ENCODE measurements at regions of chr18 and their contacts with region 1.

Region 1: DNA sequence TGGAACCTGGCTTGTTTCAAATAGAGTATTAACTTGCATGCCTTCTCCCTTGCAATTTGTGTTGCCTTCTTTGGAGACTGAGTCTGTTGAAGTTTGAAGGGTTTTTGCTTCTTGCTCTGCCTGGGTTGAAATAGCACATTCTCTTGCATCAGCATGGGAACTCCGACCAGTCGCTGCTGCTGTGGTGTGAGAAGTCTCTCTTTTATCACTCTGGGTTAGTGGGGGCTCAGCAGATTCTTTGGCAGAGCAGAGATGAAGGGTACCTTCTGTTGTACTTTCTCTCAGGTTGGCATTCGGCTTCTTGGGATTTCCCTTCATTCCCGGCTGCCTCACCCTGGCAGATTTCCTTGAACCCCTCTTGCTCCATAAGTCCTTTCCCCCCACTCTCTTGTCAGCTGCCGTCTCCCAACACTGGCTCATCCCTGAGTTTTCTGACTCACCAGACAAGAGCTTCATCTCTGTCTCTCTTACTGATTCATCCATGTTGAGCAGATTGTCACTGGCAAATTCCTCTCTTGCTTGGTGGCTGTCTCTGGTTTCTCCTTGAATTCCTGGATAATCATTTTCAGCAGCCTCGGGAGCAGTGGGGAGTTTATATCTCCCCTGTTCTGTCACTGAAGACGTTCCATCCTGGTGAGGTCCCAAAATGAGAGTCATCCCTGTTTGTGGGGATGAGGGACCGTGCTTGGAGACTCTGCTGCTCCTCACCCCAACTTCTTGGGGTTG is 49.9 kb downstream of the ALPK2 start:
- DNase-seq: peak; percentile 88
- ATAC-seq: peak; percentile 28
- H3K4me3 ChIP-seq: peak overlapping the region; percentile 57
- H3K27ac ChIP-seq: peak overlapping the region; percentile 93
- H3K4me1 ChIP-seq: peaks cover 22% of the 10 kb centered on the region
- H3K27me3 ChIP-seq: no peaks in the 10 kb centered on the region
- CTCF ChIP-seq: no peak
- POLR2A ChIP-seq: peak; percentile 85
- RAD21 ChIP-seq: peak; percentile 15

Region 2: DNA sequence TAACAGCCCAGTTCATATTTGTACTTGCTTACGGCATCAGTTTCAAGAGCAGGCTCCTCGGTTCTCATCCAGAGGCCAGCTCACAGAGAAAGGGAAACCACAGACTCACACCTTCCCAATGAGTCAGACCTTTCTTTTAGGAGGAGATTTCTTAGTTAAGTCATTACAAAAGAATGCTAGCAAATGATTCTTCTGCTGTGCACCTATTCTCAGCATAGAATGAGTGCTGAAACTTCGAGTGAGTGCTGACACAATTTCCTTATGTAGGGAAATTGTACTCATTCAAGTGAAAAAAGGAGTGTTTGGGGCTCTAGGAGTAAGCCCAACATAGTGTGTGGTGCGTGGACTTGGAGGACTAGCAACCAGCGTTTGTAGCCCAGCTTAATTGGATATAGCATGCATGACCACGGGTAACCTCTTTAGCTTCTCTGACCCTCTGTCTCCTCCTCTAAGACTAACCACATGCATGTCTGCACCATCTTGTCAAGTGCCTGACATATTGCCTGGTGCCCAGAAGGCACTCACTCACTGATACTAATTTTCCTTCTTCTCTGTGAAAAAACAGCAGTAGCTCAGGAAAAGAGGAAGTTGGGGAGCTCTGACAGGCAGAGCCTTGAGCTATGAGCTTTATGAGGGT is 37.1 kb before region 1 on chr18:
- CTCF ChIA-PET with region 1: no interaction called
- POLR2A ChIA-PET with region 1: no interaction called
- dilution Hi-C with region 1: no loop called
- in situ Hi-C with region 1: no loop called
- intact Hi-C with region 1: loop called (anchors 5 kb)
- DNase-seq: peak; percentile 99
- ATAC-seq: peak; percentile 92
- H3K4me3 ChIP-seq: no peak overlapping the region
- H3K27ac ChIP-seq: peak overlapping the region; percentile 63
- H3K4me1 ChIP-seq: peaks cover 12% of the 10 kb centered on the region
- H3K27me3 ChIP-seq: no peaks in the 10 kb centered on the region
- CTCF ChIP-seq: no peak
- POLR2A ChIP-seq: no peak
- RAD21 ChIP-seq: peak; percentile 21; the same call in 1 of the 2 replicates

Region 3: GRCh38 chr18:58590839-58591238 is 11.8 kb after region 1 on chr18:
- CTCF ChIA-PET with region 1: no interaction called
- POLR2A ChIA-PET with region 1: interaction called, 21 read pairs
- dilution Hi-C with region 1: no loop called
- in situ Hi-C with region 1: no loop called
- intact Hi-C with region 1: no loop called
- DNase-seq: no peak
- ATAC-seq: peak; percentile 8
- H3K4me3 ChIP-seq: no peak overlapping the region
- H3K27ac ChIP-seq: peak overlapping the region; percentile 92; the same call in 1 of the 2 replicates
- H3K4me1 ChIP-seq: peaks cover 8% of the 10 kb centered on the region
- H3K27me3 ChIP-seq: no peaks in the 10 kb centered on the region
- CTCF ChIP-seq: no peak
- POLR2A ChIP-seq: no peak
- RAD21 ChIP-seq: no peak

Region 4: DNA sequence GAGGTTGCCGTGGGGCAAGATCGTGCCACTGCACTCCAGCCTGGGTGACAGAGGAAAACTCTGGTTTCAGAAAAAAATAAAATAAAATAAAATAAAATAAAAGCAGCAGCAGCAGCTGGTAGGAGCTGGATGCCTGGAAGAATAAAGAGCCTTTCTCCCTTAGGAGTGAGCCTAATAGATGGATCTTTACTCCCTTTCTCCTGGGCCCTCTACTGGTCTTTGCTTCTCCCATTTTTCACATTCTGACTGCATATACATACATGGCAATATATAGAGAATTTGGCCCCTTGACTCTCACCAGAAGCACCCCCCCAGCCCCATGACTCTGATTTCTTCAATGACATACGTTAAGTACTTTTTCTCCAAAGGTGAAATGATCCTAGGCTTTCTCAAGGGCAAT is 82.4 kb after region 1 on chr18:
- CTCF ChIA-PET with region 1: no interaction called
- POLR2A ChIA-PET with region 1: no interaction called
- dilution Hi-C with region 1: no loop called
- in situ Hi-C with region 1: no loop called
- intact Hi-C with region 1: loop called (anchors 1 kb)
- DNase-seq: peak; percentile 38
- ATAC-seq: peak; percentile 71
- H3K4me3 ChIP-seq: no peak overlapping the region
- H3K27ac ChIP-seq: no peak overlapping the region
- H3K4me1 ChIP-seq: peaks cover 2% of the 10 kb centered on the region; the same call in 1 of the 2 replicates
- H3K27me3 ChIP-seq: no peaks in the 10 kb centered on the region
- CTCF ChIP-seq: peak; percentile 42
- POLR2A ChIP-seq: no peak
- RAD21 ChIP-seq: peak; percentile 46

Region 5: GRCh38 chr18:58671111-58671631 is 92.2 kb after region 1 on chr18 and contains the start of gene MALT1:
- CTCF ChIA-PET with region 1: no interaction called
- POLR2A ChIA-PET with region 1: interaction called, 4 read pairs
- dilution Hi-C with region 1: no loop called
- in situ Hi-C with region 1: loop called (anchors 5 kb)
- intact Hi-C with region 1: loop called (anchors 1 kb)
- DNase-seq: peak; percentile 85
- ATAC-seq: peak; percentile 93
- H3K4me3 ChIP-seq: peak within 1 kb of the TSS; percentile 93
- H3K27ac ChIP-seq: peak within 1 kb of the TSS; percentile 79
- H3K4me1 ChIP-seq: peaks cover 14% of the 10 kb centered on the region
- H3K27me3 ChIP-seq: no peaks in the 10 kb centered on the region
- CTCF ChIP-seq: no peak
- POLR2A ChIP-seq: peak; percentile 89
- RAD21 ChIP-seq: no peak
- total RNA-seq, gene MALT1: 25.3 and 25.8 TPM in 2 replicates

Region 6: GRCh38 chr18:58716060-58716756 is 137.2 kb after region 1 on chr18:
- CTCF ChIA-PET with region 1: no interaction called
- POLR2A ChIA-PET with region 1: no interaction called
- dilution Hi-C with region 1: no loop called
- in situ Hi-C with region 1: no loop called
- intact Hi-C with region 1: loop called (anchors 5 kb)
- DNase-seq: peak; percentile 56
- ATAC-seq: peak; percentile 91
- H3K4me3 ChIP-seq: no peak overlapping the region
- H3K27ac ChIP-seq: no peak overlapping the region
- H3K4me1 ChIP-seq: peaks cover 5% of the 10 kb centered on the region; the same call in 1 of the 2 replicates
- H3K27me3 ChIP-seq: no peaks in the 10 kb centered on the region
- CTCF ChIP-seq: no peak
- POLR2A ChIP-seq: no peak
- RAD21 ChIP-seq: no peak

Region 7: DNA sequence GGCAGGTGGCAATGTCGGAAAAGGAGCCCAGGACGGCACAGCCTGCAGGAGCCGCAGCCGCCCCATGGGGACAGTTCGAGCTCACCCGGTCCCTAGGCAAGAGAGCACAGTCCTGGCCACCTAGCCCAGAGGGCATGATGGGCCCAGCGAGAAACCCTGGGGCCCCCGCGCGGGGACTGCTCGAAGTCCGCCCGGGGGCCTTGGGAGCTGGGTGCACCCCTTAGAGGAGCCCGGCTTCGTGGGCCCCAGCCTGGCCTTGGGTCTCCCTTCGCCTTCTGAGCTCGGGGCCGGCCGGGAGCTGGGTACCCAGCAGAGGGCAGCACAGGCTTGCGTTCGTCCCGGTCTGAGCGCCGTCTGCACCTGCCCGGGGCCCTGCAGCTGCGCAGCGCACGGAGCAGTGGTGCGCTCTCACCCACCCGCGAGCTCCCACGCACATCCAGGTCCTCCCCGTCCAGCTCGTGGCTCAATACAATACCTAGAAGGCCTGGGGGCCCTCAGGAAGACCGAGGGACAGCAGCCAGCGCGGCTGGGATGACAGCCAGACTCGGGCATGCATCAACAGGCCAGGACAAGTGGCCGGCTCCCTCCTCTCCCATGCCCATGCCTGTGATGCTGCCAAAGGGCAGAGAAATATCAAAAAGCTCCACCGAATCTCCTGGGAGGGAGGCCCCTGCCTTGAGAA is 189.4 kb after region 1 on chr18:
- CTCF ChIA-PET with region 1: interaction called, 3 read pairs
- POLR2A ChIA-PET with region 1: no interaction called
- dilution Hi-C with region 1: no loop called
- in situ Hi-C with region 1: no loop called
- intact Hi-C with region 1: loop called (anchors 2 kb)
- DNase-seq: peak; percentile 48
- ATAC-seq: peak; percentile 92
- H3K4me3 ChIP-seq: 0 out of 2 replicates have a peak overlapping the region, but pooled peaks have one; percentile 20
- H3K27ac ChIP-seq: no peak overlapping the region
- H3K4me1 ChIP-seq: peaks cover 4% of the 10 kb centered on the region; the same call in 1 of the 2 replicates
- H3K27me3 ChIP-seq: peaks cover 28% of the 10 kb centered on the region
- CTCF ChIP-seq: peak; percentile 79
- POLR2A ChIP-seq: no peak
- RAD21 ChIP-seq: peak; percentile 87

Region 8: GRCh38 chr18:58928386-58928785 is 349.4 kb after region 1 on chr18:
- CTCF ChIA-PET with region 1: no interaction called
- POLR2A ChIA-PET with region 1: no interaction called
- dilution Hi-C with region 1: no loop called
- in situ Hi-C with region 1: no loop called
- intact Hi-C with region 1: no loop called
- DNase-seq: no peak
- ATAC-seq: no peak; the same call in 1 of the 2 replicates
- H3K4me3 ChIP-seq: no peak overlapping the region
- H3K27ac ChIP-seq: no peak overlapping the region
- H3K4me1 ChIP-seq: peaks cover 5% of the 10 kb centered on the region
- H3K27me3 ChIP-seq: no peaks in the 10 kb centered on the region
- CTCF ChIP-seq: no peak
- POLR2A ChIP-seq: no peak
- RAD21 ChIP-seq: no peak

Measured in IMR-90 (cell line).